Prostate gland (tissue), 2 donors: ENCODE measurements at regions of chr3 and their contacts with region 1.

Region 1: DNA sequence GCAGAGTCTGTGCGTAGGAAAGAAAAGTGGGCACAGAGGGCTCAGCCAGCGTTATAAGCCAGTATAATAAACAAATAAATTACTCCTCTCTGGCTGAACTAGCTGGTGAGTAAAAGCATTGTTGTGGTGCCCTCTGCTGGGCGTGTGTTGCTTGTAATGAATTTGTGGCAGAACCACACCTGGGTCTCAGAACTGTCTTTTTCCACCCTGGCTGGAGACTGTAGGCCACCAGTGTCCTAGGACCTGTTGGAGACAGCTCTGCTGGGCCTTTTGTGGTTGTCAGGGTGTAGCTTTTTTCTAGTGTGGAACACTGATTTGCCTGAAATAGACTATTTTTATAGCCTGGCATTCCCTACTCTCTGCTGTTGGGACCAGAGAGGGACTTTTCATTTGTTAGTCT is 130.5 kb upstream of the EIF1B start:
- DNase-seq: peak; percentile 74
- H3K4me3 ChIP-seq: no peak overlapping the region
- H3K27ac ChIP-seq: no peak overlapping the region
- H3K4me1 ChIP-seq: no peaks in the 10 kb centered on the region
- H3K27me3 ChIP-seq: no peaks in the 10 kb centered on the region
- CTCF ChIP-seq: peak; percentile 48 to 71 (median 70)
- POLR2A ChIP-seq: no peak

Region 2: DNA sequence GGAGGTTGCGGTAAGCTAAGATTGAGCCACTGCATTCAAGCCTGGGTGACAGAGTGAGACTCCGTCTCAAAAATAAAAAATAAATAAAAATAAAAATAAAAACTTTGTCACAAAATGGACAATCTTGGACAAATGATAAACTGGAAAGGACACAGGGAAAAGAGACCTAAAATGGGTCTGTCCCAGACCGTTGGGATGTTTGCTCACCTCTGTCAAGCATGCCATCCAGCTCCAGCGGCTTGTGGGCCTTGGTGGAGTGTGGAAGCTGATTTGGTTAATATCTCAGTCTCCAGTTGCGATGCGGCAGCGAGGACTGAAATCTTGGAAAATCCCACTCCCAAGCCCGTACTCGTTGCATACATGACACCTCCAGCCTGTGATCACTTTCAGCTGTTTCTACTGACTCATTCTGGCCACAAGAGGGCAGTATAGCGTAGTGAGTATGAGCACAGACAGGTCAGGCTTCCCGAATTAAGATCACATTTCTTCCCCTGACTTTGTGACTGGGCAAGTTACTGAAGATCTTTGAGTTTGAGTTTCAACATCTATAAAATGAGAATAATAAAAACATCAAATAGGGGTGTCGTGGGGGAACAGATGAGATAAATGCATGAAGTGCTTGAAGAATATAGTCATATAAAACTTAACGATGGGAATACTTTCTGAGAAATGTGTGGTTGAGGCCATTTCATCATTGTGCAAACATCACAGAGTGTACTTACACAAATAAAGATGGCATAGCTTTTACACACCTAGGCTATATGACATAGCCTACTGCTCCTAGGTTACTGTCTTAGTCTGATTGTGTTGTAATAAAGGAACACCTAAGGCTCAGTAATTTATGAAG is 731.2 kb before region 1 on chr3:
- intact Hi-C with region 1: loop called (anchors 10 kb)
- DNase-seq: peak; percentile 78
- H3K4me3 ChIP-seq: no peak overlapping the region
- H3K27ac ChIP-seq: no peak overlapping the region
- H3K4me1 ChIP-seq: no peaks in the 10 kb centered on the region
- H3K27me3 ChIP-seq: no peaks in the 10 kb centered on the region
- CTCF ChIP-seq: peak; percentile 69 to 89 (median 76)
- POLR2A ChIP-seq: no peak

Region 3: GRCh38 chr3:39707314-39707909 is 471.6 kb before region 1 on chr3:
- intact Hi-C with region 1: loop called (anchors 5 kb)
- DNase-seq: peak; percentile 15
- H3K4me3 ChIP-seq: no peak overlapping the region
- H3K27ac ChIP-seq: no peak overlapping the region
- H3K4me1 ChIP-seq: no peaks in the 10 kb centered on the region
- H3K27me3 ChIP-seq: no peaks in the 10 kb centered on the region
- CTCF ChIP-seq: peak in 3 of 4 experiments; percentile 50 to 75 (median 63)
- POLR2A ChIP-seq: no peak

Region 4: GRCh38 chr3:39812537-39812936 is 366.5 kb before region 1 on chr3:
- intact Hi-C with region 1: loop called (anchors 10 kb)
- DNase-seq: no peak
- H3K4me3 ChIP-seq: no peak overlapping the region
- H3K27ac ChIP-seq: no peak overlapping the region
- H3K4me1 ChIP-seq: peaks cover 4% of the 10 kb centered on the region
- H3K27me3 ChIP-seq: no peaks in the 10 kb centered on the region
- CTCF ChIP-seq: peak in 1 of 4 experiments; percentile 37
- POLR2A ChIP-seq: no peak

Region 5: GRCh38 chr3:40086890-40087888 is 91.8 kb before region 1 on chr3:
- intact Hi-C with region 1: no loop called
- DNase-seq: peak; percentile 46
- H3K4me3 ChIP-seq: no peak overlapping the region
- H3K27ac ChIP-seq: no peak overlapping the region
- H3K4me1 ChIP-seq: no peaks in the 10 kb centered on the region
- H3K27me3 ChIP-seq: no peaks in the 10 kb centered on the region
- CTCF ChIP-seq: no peak
- POLR2A ChIP-seq: no peak